ENCODE measurements at regions of chr18 and their contacts with region 1.

Region 1: GRCh38 chr18:58991167-58991798 is 126.6 kb downstream of the ZNF532 start:
- DNase-seq: no peak
- ATAC-seq: peak; percentile 80 to 86 (median 82)
- H3K4me3 ChIP-seq: no peak overlapping the region
- H3K27ac ChIP-seq: peak overlapping the region; percentile 90
- H3K4me1 ChIP-seq: peaks cover 58% of the 10 kb centered on the region
- H3K27me3 ChIP-seq: no peaks in the 10 kb centered on the region
- CTCF ChIP-seq: peak; percentile 23

Region 2: DNA sequence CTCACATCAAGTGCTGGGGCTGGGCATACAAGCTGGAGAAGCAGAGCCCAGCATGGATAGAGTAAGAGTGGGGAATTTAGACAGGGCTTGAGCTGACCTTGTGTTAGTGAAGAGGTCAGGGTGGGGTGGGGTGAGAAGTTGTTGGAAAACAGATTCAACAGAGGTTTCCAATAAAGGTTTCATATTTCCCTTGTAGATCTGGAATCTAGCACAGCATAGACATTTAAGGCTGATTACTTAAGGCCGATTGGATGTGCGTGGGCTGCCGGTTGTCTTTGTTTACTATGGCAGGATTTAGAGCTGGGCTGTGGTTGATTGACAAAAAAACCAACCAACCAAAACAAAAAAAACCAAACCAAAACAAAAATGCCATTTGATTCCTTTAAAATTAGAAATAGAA is 33.5 kb after region 1 on chr18:
- intact Hi-C with region 1: loop called in 1 of 2 experiments (anchors 5 kb)
- DNase-seq: no peak
- ATAC-seq: peak in 2 of 4 donors; percentile 34 to 43
- H3K4me3 ChIP-seq: no peak overlapping the region
- H3K27ac ChIP-seq: peak overlapping the region; percentile 71
- H3K4me1 ChIP-seq: peaks cover 42% of the 10 kb centered on the region
- H3K27me3 ChIP-seq: no peaks in the 10 kb centered on the region
- CTCF ChIP-seq: no peak

Region 3: GRCh38 chr18:59063300-59063906 is 72.1 kb after region 1 on chr18:
- intact Hi-C with region 1: loop called in 1 of 2 experiments (anchors 2 kb)
- DNase-seq: no peak
- ATAC-seq: peak; percentile 58 to 91 (median 90)
- H3K4me3 ChIP-seq: no peak overlapping the region
- H3K27ac ChIP-seq: peak overlapping the region; percentile 80
- H3K4me1 ChIP-seq: peaks cover 13% of the 10 kb centered on the region
- H3K27me3 ChIP-seq: no peaks in the 10 kb centered on the region
- CTCF ChIP-seq: no peak

Measured in psoas muscle (tissue), 8 donors.